Endothelial cell of umbilical vein (primary cell): ENCODE measurements at regions of chr4 and their contacts with region 1.

Region 1: DNA sequence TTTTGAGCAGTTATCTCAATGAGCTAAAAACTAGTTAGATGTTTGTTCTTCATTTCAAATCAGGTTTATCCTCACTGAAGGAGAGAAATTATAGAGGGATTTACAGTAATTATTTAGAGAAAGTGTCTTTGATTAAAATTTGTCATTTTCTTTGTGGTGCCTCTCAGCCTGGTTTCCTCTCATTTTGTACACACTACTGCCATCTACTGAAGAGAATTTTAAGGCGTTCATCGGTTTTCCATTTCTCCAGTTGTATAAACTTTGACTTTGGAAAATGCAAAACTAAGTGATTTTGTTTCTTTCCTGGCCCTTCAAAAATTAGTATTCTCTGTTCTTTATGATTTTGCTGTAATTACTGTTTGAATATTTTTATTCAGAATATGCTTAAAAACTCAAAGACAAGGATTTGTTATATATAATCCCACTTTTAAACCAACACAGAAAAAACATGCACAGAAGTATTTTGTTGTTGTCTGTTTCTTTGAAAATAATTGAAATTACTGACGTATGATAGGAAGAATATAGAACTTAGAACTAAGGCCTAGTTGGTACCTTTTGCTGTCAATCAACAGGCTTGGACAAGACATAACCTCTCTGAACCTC is 34.4 kb upstream of the ANXA3 start:
- DNase-seq: peak; percentile 53
- H3K4me3 ChIP-seq: no peak overlapping the region
- H3K27ac ChIP-seq: no peak overlapping the region
- H3K4me1 ChIP-seq: peaks cover 8% of the 10 kb centered on the region
- H3K27me3 ChIP-seq: no peaks in the 10 kb centered on the region
- CTCF ChIP-seq: peak; percentile 24 to 34
- POLR2A ChIP-seq: no peak

Region 2: DNA sequence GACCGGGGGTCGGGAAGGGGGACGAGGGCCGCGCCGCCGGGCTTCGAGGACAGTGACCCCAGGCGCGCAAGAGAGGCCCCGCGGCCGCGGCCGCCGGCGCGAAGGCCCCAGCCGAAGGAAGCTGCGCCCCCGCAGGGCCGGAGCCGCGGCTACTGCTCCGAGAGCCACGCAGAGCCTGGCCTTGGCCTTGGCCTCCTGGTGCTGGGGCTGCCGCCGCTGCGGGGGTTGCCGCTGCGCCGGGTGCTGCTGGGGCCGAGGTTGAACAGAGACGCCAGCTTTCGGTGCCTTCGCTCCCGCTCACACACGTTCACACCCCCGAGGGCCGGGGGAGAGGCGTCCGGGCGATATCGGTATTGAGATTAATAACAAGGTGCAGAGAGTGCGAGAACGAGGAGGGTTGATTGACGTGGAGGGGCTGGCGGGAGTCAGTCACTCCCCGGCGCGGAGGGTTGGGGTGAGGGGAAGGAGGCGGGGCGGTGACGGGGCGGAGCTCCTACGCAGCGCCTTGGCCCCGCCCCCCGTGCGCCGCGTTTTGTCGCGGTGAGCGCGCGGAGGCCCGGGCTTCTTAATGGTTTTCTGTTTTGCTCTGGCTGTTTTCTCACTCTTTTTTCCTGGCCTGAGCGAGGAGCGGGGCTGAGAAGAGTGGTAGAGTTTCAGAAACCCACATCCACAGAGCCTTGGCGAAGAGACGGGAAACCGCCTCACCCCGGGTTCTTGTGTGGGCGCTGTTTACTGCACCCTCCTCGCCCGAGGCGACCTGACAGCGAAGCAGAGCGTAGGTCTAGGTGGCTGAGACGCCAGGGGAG is 697.1 kb before region 1 on chr4:
- CTCF ChIA-PET with region 1: no interaction called
- POLR2A ChIA-PET with region 1: no interaction called
- dilution Hi-C with region 1: no loop called
- intact Hi-C with region 1: loop called (anchors 10 kb)
- DNase-seq: peak; percentile 89
- H3K4me3 ChIP-seq: peak overlapping the region; percentile 85 to 99 (median 94)
- H3K27ac ChIP-seq: peak overlapping the region; percentile 96
- H3K4me1 ChIP-seq: peaks cover 28% of the 10 kb centered on the region
- H3K27me3 ChIP-seq: no peaks in the 10 kb centered on the region
- CTCF ChIP-seq: no peak
- POLR2A ChIP-seq: peak; percentile 90

Region 3: GRCh38 chr4:77994194-77994721 is 522.9 kb before region 1 on chr4:
- CTCF ChIA-PET with region 1: interaction called, 29 read pairs
- POLR2A ChIA-PET with region 1: no interaction called
- dilution Hi-C with region 1: no loop called
- intact Hi-C with region 1: loop called (anchors 1 kb)
- DNase-seq: peak; percentile 69
- H3K4me3 ChIP-seq: no peak overlapping the region
- H3K27ac ChIP-seq: no peak overlapping the region
- H3K4me1 ChIP-seq: peaks cover 9% of the 10 kb centered on the region
- H3K27me3 ChIP-seq: peaks cover 0 to 6% of the 10 kb centered on the region in 2 experiments
- CTCF ChIP-seq: peak; percentile 36 to 67
- POLR2A ChIP-seq: no peak

Region 4: GRCh38 chr4:78569291-78569821 is 52.2 kb after region 1 on chr4:
- CTCF ChIA-PET with region 1: interaction called, 8 read pairs
- POLR2A ChIA-PET with region 1: no interaction called
- dilution Hi-C with region 1: no loop called
- intact Hi-C with region 1: loop called (anchors 1 kb)
- DNase-seq: peak; percentile 80
- H3K4me3 ChIP-seq: peak overlapping the region in 1 of 3 experiments; percentile 44
- H3K27ac ChIP-seq: peak overlapping the region; percentile 81
- H3K4me1 ChIP-seq: peaks cover 30% of the 10 kb centered on the region
- H3K27me3 ChIP-seq: no peaks in the 10 kb centered on the region
- CTCF ChIP-seq: no peak
- POLR2A ChIP-seq: no peak

Region 5: GRCh38 chr4:78864405-78865024 is 347.4 kb after region 1 on chr4:
- CTCF ChIA-PET with region 1: interaction called, 6 read pairs
- POLR2A ChIA-PET with region 1: no interaction called
- dilution Hi-C with region 1: no loop called
- intact Hi-C with region 1: loop called (anchors 1 kb)
- DNase-seq: peak; percentile 85
- H3K4me3 ChIP-seq: no peak overlapping the region
- H3K27ac ChIP-seq: no peak overlapping the region
- H3K4me1 ChIP-seq: no peaks in the 10 kb centered on the region
- H3K27me3 ChIP-seq: no peaks in the 10 kb centered on the region
- CTCF ChIP-seq: peak; percentile 41 to 42
- POLR2A ChIP-seq: no peak